ENCODE measurements at regions of chr21 and their contacts with region 1.

Region 1: GRCh38 chr21:36193207-36193606 is 36.6 kb downstream of the DOP1B start:
- DNase-seq: no peak
- H3K4me3 ChIP-seq: no peak overlapping the region
- H3K27ac ChIP-seq: no peak overlapping the region
- H3K4me1 ChIP-seq: peaks cover 19% of the 10 kb centered on the region
- H3K27me3 ChIP-seq: no peaks in the 10 kb centered on the region
- CTCF ChIP-seq: no peak

Region 2: GRCh38 chr21:36369064-36369685 is 176.0 kb after region 1 on chr21:
- dilution Hi-C with region 1: loop called (anchors 10 kb)
- DNase-seq: no peak
- H3K4me3 ChIP-seq: no peak overlapping the region
- H3K27ac ChIP-seq: no peak overlapping the region
- H3K4me1 ChIP-seq: no peaks in the 10 kb centered on the region
- H3K27me3 ChIP-seq: no peaks in the 10 kb centered on the region
- CTCF ChIP-seq: no peak